Activated CD8-positive, alpha-beta T cell treated with anti-CD3 and anti-CD28 coated beads for 36 hours (primary cell): ENCODE measurements at regions of chr21 and their contacts with region 1.

Region 1: DNA sequence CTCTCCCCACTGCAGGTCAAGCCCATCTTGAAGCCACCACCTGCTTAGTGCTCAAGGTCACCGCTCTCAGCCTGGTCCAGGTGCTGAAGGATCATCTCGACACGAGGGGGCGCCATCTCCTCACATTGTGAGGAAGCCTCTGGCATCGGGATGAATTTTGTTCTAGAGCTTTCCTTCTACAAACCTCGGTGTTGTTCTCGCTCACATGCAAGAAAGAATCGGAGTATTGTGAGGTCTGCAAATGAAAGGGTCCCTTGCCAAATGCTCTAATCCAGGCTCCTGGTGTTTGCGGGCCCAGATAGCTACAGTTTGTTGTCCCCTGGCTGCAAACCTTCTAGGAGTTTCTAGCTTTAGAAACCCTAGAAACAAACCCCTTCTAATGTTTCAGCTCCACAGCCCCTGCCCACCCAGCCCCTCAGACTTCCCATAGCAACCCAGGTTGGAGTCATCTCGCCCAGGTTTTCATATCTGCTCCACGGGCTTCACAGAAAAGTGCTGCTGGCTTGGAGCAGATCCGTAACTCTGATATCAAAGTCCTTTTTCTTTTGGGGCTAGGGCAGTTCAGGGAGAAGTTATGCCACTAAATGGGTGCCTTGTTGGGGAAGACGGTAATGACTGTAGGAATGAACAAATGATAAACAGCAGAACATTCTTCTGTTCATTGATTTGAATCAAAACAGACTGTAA is 8.6 kb upstream of the ATP5PO start:
- DNase-seq: peak; percentile 95
- ATAC-seq: peak; percentile 98
- H3K4me3 Mint-ChIP-seq: no peak overlapping the region
- H3K27ac Mint-ChIP-seq: peak overlapping the region; percentile 46
- H3K4me1 Mint-ChIP-seq: peaks cover 8% of the 10 kb centered on the region
- H3K27me3 Mint-ChIP-seq: no peaks in the 10 kb centered on the region
- CTCF ChIP-seq: peak; percentile 90

Region 2: DNA sequence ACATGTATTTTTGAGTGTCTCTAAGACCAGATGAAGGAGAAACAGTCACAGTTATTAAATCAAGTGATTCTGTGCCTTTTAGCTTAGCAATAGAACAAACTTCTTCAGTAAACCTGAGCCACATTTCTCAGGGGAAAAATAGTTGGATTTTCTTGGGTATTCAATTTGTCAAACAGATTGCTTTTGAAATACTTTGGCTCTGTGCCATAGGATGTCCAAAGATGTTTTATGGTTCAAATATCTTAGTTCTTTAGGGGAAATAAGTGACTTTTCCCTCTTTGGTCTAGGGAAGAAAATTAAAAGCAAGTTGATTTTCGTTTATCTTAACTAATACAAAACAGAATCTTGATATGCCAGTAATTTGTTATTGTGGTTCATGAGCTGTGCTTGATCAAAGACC is 134.5 kb before region 1 on chr21:
- CTCF ChIA-PET with region 1: no interaction called
- POLR2A ChIA-PET with region 1: no interaction called
- intact Hi-C with region 1: no loop called
- DNase-seq: no peak
- ATAC-seq: no peak
- H3K4me3 Mint-ChIP-seq: no peak overlapping the region
- H3K27ac Mint-ChIP-seq: no peak overlapping the region
- H3K4me1 Mint-ChIP-seq: no peaks in the 10 kb centered on the region
- H3K27me3 Mint-ChIP-seq: no peaks in the 10 kb centered on the region
- CTCF ChIP-seq: no peak

Region 3: DNA sequence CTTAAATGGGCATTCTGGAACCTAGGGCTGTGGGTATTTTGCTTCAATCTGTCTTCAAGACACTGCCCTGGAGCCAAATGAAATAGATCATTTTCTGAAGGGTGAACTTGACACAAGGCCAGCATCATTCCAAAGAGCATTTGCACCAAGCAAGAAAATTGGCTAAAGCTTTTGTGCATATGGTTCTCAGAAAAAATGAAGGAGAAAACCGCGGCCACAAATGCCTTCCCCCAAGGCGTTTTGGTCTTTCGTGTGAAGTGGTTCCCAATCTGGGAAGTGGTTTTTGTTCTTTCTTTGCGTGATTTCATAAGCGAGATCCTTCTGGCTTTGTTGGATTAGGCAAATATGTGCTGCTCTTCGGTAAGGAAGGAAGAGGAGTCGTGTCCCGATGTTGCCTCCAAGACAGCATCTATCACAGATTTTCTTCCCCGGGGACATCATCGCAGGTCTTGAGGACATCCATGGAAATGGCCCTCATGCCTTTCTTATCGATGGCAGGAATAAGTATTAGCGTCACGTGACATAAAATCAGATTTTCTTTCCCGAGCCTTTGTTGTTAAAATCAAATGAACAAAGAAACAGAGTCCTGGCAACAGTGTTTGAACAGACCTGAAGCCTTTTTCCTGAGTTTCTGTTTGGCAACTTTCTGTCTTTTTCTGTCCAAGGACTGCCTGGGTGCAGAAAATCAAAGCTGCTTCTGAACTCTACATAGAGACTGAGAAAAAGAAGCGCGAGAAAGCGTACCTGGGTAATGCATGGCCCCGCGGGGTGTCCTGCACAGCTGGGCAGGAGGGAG is 39.6 kb before region 1 on chr21:
- CTCF ChIA-PET with region 1: no interaction called
- POLR2A ChIA-PET with region 1: no interaction called
- intact Hi-C with region 1: no loop called
- DNase-seq: no peak
- ATAC-seq: no peak
- H3K4me3 Mint-ChIP-seq: no peak overlapping the region
- H3K27ac Mint-ChIP-seq: no peak overlapping the region
- H3K4me1 Mint-ChIP-seq: no peaks in the 10 kb centered on the region
- H3K27me3 Mint-ChIP-seq: no peaks in the 10 kb centered on the region
- CTCF ChIP-seq: no peak

Region 4: GRCh38 chr21:33940164-33940880 is 16.1 kb after region 1 on chr21:
- CTCF ChIA-PET with region 1: interaction called, 46 read pairs
- POLR2A ChIA-PET with region 1: interaction called, 3 read pairs
- intact Hi-C with region 1: no loop called
- DNase-seq: no peak
- ATAC-seq: no peak
- H3K4me3 Mint-ChIP-seq: no peak overlapping the region
- H3K27ac Mint-ChIP-seq: peak overlapping the region; percentile 71
- H3K4me1 Mint-ChIP-seq: peaks cover 79% of the 10 kb centered on the region
- H3K27me3 Mint-ChIP-seq: no peaks in the 10 kb centered on the region
- CTCF ChIP-seq: no peak

Region 5: GRCh38 chr21:33998402-33998801 is 74.2 kb after region 1 on chr21:
- CTCF ChIA-PET with region 1: interaction called, 10 read pairs
- POLR2A ChIA-PET with region 1: no interaction called
- intact Hi-C with region 1: no loop called
- DNase-seq: no peak
- ATAC-seq: peak; percentile 42
- H3K4me3 Mint-ChIP-seq: no peak overlapping the region
- H3K27ac Mint-ChIP-seq: no peak overlapping the region
- H3K4me1 Mint-ChIP-seq: peaks cover 24% of the 10 kb centered on the region
- H3K27me3 Mint-ChIP-seq: no peaks in the 10 kb centered on the region
- CTCF ChIP-seq: no peak

Region 6: GRCh38 chr21:34073032-34073869 is 149.0 kb after region 1 on chr21 and contains the starts of genes MRPS6 and SLC5A3:
- CTCF ChIA-PET with region 1: interaction called, 57 read pairs
- POLR2A ChIA-PET with region 1: no interaction called
- intact Hi-C with region 1: no loop called
- DNase-seq: peak; percentile 74
- ATAC-seq: peak; percentile 69
- H3K4me3 Mint-ChIP-seq: peak within 1 kb of the TSS; percentile 95
- H3K27ac Mint-ChIP-seq: peak within 1 kb of the TSS; percentile 91
- H3K4me1 Mint-ChIP-seq: peaks cover 37% of the 10 kb centered on the region
- H3K27me3 Mint-ChIP-seq: no peaks in the 10 kb centered on the region
- CTCF ChIP-seq: no peak
- total RNA-seq, gene MRPS6: 93.9 to 95.2 TPM
- total RNA-seq, gene SLC5A3: 21.1 to 21.9 TPM

Region 7: DNA sequence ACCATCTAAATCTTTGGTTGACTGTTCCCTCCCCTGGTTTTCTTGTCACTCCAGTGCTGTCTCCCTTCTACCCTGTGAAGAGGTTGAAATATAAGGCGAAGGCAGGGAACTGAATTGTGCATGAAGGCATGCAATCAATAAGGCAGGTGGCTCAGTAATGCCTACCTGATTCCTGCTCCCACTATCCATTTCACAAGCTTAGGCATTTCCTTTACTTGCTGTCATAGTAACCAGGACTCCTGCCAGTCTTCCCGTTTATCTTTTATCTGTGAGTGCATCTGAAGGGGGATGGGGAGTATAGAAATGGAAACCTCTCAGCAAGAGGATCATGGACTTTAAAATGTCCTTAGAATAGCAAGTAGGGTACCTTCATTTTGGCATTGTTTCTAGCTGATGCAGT is 189.6 kb after region 1 on chr21:
- CTCF ChIA-PET with region 1: interaction called, 11 read pairs
- POLR2A ChIA-PET with region 1: no interaction called
- intact Hi-C with region 1: no loop called
- DNase-seq: no peak
- ATAC-seq: no peak
- H3K4me3 Mint-ChIP-seq: no peak overlapping the region
- H3K27ac Mint-ChIP-seq: no peak overlapping the region
- H3K4me1 Mint-ChIP-seq: peaks cover 49% of the 10 kb centered on the region
- H3K27me3 Mint-ChIP-seq: no peaks in the 10 kb centered on the region
- CTCF ChIP-seq: no peak

Region 8: GRCh38 chr21:34202553-34203372 is 278.5 kb after region 1 on chr21:
- CTCF ChIA-PET with region 1: interaction called, 21 read pairs
- POLR2A ChIA-PET with region 1: interaction called, 3 read pairs
- intact Hi-C with region 1: no loop called
- DNase-seq: no peak
- ATAC-seq: no peak
- H3K4me3 Mint-ChIP-seq: peak overlapping the region; percentile 67
- H3K27ac Mint-ChIP-seq: peak overlapping the region; percentile 17
- H3K4me1 Mint-ChIP-seq: peaks cover 49% of the 10 kb centered on the region
- H3K27me3 Mint-ChIP-seq: no peaks in the 10 kb centered on the region
- CTCF ChIP-seq: no peak

Region 9: DNA sequence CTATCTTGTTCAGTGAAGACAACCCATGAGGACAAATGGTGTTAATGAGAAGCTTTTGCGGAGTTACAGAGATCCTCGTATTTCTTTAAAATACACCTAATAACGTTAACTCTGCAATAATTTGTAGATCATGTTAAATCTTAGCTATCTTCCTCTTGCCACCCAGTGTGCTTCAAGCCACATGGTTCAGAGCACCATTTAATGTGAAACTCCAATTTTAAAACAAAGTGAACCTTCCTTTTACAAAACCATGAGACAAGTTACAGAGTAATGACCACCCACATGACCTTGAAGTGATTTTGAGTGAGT is 437.9 kb after region 1 on chr21:
- CTCF ChIA-PET with region 1: interaction called, 15 read pairs
- POLR2A ChIA-PET with region 1: no interaction called
- intact Hi-C with region 1: no loop called
- DNase-seq: no peak
- ATAC-seq: peak; percentile 29
- H3K4me3 Mint-ChIP-seq: no peak overlapping the region
- H3K27ac Mint-ChIP-seq: no peak overlapping the region
- H3K4me1 Mint-ChIP-seq: peaks cover 3% of the 10 kb centered on the region
- H3K27me3 Mint-ChIP-seq: peaks cover 5% of the 10 kb centered on the region
- CTCF ChIP-seq: peak; percentile 53